GM18951 (cell line): ENCODE measurements at regions of chr3 and their contacts with region 1.

Region 1: GRCh38 chr3:156664831-156665178 is 9.6 kb upstream of the TIPARP start:
- POLR2A ChIP-seq: no peak

Region 2: GRCh38 chr3:156554842-156555687 is 109.7 kb before region 1 on chr3 and contains the start of gene SSR3:
- in situ Hi-C with region 1: loop called (anchors 10 kb)
- POLR2A ChIP-seq: peak; percentile 92